Mammary epithelial cell (primary cell): ENCODE measurements at regions of chr17 and their contacts with region 1.

Region 1: DNA sequence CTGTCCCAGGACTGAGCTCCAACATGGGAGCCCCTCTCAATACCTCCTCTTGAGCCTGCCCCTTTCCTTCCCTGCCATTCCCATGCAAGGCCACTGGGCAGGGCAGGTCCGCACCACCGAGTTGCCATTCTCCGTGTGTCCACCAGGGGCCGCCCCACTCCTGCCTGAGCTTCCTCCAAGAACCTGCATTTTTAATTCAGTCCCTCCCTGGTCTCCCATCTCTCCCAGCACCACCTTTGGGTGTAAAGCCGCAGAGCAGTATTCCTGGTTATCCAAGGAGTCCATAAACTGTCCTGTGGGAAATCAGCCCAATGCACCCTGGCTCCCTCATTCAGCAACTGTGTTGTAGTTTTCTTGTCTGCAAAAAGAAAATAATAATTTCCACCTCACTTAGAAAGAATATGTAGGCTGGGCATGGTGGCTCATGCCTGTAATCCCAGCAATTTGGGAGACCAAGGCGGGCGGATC is 15.9 kb upstream of the ANKRD40CL start:
- DNase-seq: peak; percentile 77
- H3K4me3 ChIP-seq: no peak overlapping the region
- H3K27ac ChIP-seq: no peak overlapping the region
- H3K4me1 ChIP-seq: peaks cover 27% of the 10 kb centered on the region
- H3K27me3 ChIP-seq: no peaks in the 10 kb centered on the region
- CTCF ChIP-seq: peak; percentile 99 to 100

Region 2: GRCh38 chr17:50547035-50547735 is 236.0 kb before region 1 on chr17 and contains the start of gene SPATA20:
- CTCF ChIA-PET with region 1: no interaction called
- dilution Hi-C with region 1: no loop called
- in situ Hi-C with region 1: no loop called
- intact Hi-C with region 1: loop called (anchors 1 kb)
- DNase-seq: peak; percentile 82
- H3K4me3 ChIP-seq: peak within 1 kb of the TSS; percentile 37 to 56 (median 55)
- H3K27ac ChIP-seq: peak within 1 kb of the TSS; percentile 23
- H3K4me1 ChIP-seq: peaks cover 21% of the 10 kb centered on the region
- H3K27me3 ChIP-seq: no peaks in the 10 kb centered on the region
- CTCF ChIP-seq: peak; percentile 95 to 99
- total RNA-seq, gene SPATA20: 65.6 to 79.9 TPM

Region 3: GRCh38 chr17:50575581-50576210 is 207.5 kb before region 1 on chr17:
- CTCF ChIA-PET with region 1: no interaction called
- dilution Hi-C with region 1: no loop called
- in situ Hi-C with region 1: no loop called
- intact Hi-C with region 1: no loop called
- DNase-seq: no peak
- H3K4me3 ChIP-seq: no peak overlapping the region
- H3K27ac ChIP-seq: no peak overlapping the region
- H3K4me1 ChIP-seq: no peaks in the 10 kb centered on the region
- H3K27me3 ChIP-seq: peaks cover 9% of the 10 kb centered on the region
- CTCF ChIP-seq: no peak

Region 4: GRCh38 chr17:50707289-50708049 is 75.8 kb before region 1 on chr17 and contains the start of gene ANKRD40:
- CTCF ChIA-PET with region 1: no interaction called
- dilution Hi-C with region 1: loop called (anchors 5 kb)
- in situ Hi-C with region 1: no loop called
- intact Hi-C with region 1: no loop called
- DNase-seq: peak; percentile 94
- H3K4me3 ChIP-seq: peak within 1 kb of the TSS; percentile 87 to 95 (median 88)
- H3K27ac ChIP-seq: peak within 1 kb of the TSS; percentile 98
- H3K4me1 ChIP-seq: peaks cover 14% of the 10 kb centered on the region
- H3K27me3 ChIP-seq: no peaks in the 10 kb centered on the region
- CTCF ChIP-seq: no peak
- total RNA-seq, gene ANKRD40: 36.3 to 38.5 TPM

Region 5: GRCh38 chr17:50798424-50799288 is 15.4 kb after region 1 on chr17:
- CTCF ChIA-PET with region 1: no interaction called
- dilution Hi-C with region 1: no loop called
- in situ Hi-C with region 1: no loop called
- intact Hi-C with region 1: loop called (anchors 1 kb)
- DNase-seq: peak; percentile 85
- H3K4me3 ChIP-seq: no peak overlapping the region
- H3K27ac ChIP-seq: peak overlapping the region; percentile 53
- H3K4me1 ChIP-seq: peaks cover 27% of the 10 kb centered on the region
- H3K27me3 ChIP-seq: no peaks in the 10 kb centered on the region
- CTCF ChIP-seq: no peak

Region 6: GRCh38 chr17:50816771-50817751 is 33.8 kb after region 1 on chr17:
- CTCF ChIA-PET with region 1: no interaction called
- dilution Hi-C with region 1: no loop called
- in situ Hi-C with region 1: no loop called
- intact Hi-C with region 1: loop called (anchors 1 kb)
- DNase-seq: no peak
- H3K4me3 ChIP-seq: no peak overlapping the region
- H3K27ac ChIP-seq: peak overlapping the region; percentile 58
- H3K4me1 ChIP-seq: peaks cover 18% of the 10 kb centered on the region
- H3K27me3 ChIP-seq: no peaks in the 10 kb centered on the region
- CTCF ChIP-seq: peak; percentile 43 to 63

Region 7: DNA sequence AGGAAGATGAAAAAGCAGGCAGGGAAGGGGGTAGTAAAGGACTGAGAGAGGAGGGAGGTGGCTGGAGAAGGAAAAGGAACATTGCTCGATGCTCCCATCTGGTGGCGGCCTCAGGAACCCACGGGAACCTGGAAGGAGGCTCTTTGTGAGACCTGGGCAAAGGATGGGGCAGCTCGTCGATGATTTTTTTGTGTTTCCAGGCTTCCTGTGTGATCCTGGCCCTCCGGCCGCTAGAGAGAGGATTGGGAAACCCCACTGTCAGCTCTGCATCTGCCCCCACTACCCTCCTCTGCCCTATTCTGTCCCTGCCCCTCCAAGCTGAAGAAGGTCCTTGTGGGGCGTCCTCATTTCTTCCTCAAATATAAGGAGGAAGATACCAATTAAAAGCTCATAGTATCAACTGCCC is 58.7 kb after region 1 on chr17:
- CTCF ChIA-PET with region 1: no interaction called
- dilution Hi-C with region 1: loop called (anchors 10 kb)
- in situ Hi-C with region 1: loop called (anchors 5 kb)
- intact Hi-C with region 1: loop called (anchors 1 kb)
- DNase-seq: peak; percentile 51
- H3K4me3 ChIP-seq: no peak overlapping the region
- H3K27ac ChIP-seq: no peak overlapping the region
- H3K4me1 ChIP-seq: peaks cover 28% of the 10 kb centered on the region
- H3K27me3 ChIP-seq: no peaks in the 10 kb centered on the region
- CTCF ChIP-seq: peak; percentile 86 to 92

Region 8: DNA sequence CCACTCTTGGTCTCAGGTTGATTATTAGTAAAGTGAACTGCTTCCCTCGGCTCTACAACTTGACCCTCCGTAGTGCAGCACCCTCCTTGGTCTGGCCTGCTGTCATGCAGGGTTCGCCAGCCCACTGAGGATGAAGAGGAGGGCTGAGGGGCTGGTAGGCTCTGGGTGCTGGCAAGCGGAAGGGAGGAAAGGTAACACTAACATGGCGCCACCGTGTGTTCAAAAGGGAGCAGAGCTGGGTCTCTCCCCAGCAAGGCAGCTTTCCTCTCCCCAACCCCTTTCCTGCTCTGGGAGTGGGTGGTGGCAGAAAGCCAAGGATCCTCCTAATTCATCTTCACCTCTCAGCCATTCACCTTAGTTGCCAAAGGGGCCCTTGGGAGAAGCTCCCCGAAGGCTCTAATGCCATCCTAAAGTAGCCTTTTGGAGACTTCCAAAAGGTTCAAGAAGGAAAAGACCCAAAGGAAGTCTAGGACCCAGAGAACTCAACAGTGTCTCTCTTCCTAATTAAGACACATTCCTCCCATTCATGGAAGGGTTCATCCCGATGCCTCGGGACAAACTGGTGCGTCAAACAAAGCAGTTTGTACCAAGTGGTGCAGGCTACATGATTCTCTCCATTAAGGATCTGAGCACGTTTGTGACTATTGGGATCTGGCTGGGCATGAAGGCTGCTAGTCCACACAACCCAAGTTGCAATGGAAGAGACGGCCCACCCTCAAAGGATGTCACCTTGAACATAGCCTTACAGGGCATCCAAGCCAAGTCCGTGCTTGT is 173.7 kb after region 1 on chr17:
- CTCF ChIA-PET with region 1: no interaction called
- dilution Hi-C with region 1: no loop called
- in situ Hi-C with region 1: loop called (anchors 10 kb)
- intact Hi-C with region 1: loop called (anchors 1 kb)
- DNase-seq: peak; percentile 39
- H3K4me3 ChIP-seq: no peak overlapping the region
- H3K27ac ChIP-seq: no peak overlapping the region
- H3K4me1 ChIP-seq: peaks cover 41% of the 10 kb centered on the region
- H3K27me3 ChIP-seq: no peaks in the 10 kb centered on the region
- CTCF ChIP-seq: peak; percentile 79 to 87